Tibial artery (tissue), 4 donors: ENCODE measurements at regions of chr3 and their contacts with region 1.

Region 1: GRCh38 chr3:37024092-37024491 is 30.8 kb downstream of the MLH1 start:
- DNase-seq: no peak
- H3K4me3 ChIP-seq: no peak overlapping the region
- H3K27ac ChIP-seq: no peak overlapping the region
- H3K4me1 ChIP-seq: peaks cover 0 to 26% (median 5%) of the 10 kb centered on the region in 4 donors
- H3K27me3 ChIP-seq: no peaks in the 10 kb centered on the region
- CTCF ChIP-seq: peak; percentile 46 to 61

Region 2: GRCh38 chr3:37210230-37210629 is 186.1 kb after region 1 on chr3:
- intact Hi-C with region 1: loop called (anchors 2 kb)
- DNase-seq: no peak
- H3K4me3 ChIP-seq: no peak overlapping the region
- H3K27ac ChIP-seq: no peak overlapping the region
- H3K4me1 ChIP-seq: peaks cover 0 to 10% (median 2%) of the 10 kb centered on the region in 4 donors
- H3K27me3 ChIP-seq: no peaks in the 10 kb centered on the region
- CTCF ChIP-seq: no peak